ENCODE measurements at regions of chr14 and their contacts with region 1.

Region 1: GRCh38 chr14:29380826-29381225 is 546.8 kb downstream of the PRKD1 start:
- DNase-seq: no peak
- H3K4me3 ChIP-seq: no peak overlapping the region
- H3K27ac ChIP-seq: no peak overlapping the region
- H3K4me1 ChIP-seq: no peaks in the 10 kb centered on the region
- H3K27me3 ChIP-seq: no peaks in the 10 kb centered on the region
- CTCF ChIP-seq: no peak
- EP300 ChIP-seq: no peak
- POLR2A ChIP-seq: no peak

Region 2: DNA sequence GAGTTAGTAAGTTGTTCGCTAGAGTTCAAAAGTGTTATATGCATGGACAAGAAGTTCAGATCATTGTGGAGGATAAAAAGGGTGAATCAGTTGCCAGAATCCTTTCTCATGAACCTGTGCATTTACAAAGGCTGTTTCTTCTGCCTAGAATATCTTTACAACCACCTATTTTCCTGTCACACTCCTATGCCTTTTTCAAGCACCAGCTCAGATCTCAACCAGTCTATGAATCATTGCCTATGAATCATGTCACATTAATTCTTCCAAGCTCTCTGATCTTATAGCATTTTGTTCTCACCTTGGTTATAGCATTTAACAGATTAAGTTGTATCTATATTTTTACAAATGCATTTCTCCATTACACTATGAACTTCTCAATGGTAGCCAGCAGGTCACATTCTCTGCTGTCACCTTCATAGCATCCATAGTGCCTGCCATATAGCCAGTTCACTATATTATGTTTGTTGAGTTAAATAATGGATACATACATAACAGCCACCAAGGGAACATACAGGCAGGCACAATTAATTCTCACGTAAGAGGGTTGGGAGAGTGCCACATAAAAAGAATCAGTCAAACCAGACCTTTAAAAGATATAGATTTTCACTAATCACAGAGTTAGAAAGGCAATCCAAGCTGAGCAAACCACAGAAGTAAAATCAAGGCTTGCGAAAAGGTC is 41.2 kb before region 1 on chr14:
- in situ Hi-C with region 1: no loop called
- intact Hi-C with region 1: no loop called
- DNase-seq: no peak
- H3K4me3 ChIP-seq: no peak overlapping the region
- H3K27ac ChIP-seq: no peak overlapping the region
- H3K4me1 ChIP-seq: no peaks in the 10 kb centered on the region
- H3K27me3 ChIP-seq: no peaks in the 10 kb centered on the region
- CTCF ChIP-seq: no peak
- EP300 ChIP-seq: no peak
- POLR2A ChIP-seq: no peak

Region 3: DNA sequence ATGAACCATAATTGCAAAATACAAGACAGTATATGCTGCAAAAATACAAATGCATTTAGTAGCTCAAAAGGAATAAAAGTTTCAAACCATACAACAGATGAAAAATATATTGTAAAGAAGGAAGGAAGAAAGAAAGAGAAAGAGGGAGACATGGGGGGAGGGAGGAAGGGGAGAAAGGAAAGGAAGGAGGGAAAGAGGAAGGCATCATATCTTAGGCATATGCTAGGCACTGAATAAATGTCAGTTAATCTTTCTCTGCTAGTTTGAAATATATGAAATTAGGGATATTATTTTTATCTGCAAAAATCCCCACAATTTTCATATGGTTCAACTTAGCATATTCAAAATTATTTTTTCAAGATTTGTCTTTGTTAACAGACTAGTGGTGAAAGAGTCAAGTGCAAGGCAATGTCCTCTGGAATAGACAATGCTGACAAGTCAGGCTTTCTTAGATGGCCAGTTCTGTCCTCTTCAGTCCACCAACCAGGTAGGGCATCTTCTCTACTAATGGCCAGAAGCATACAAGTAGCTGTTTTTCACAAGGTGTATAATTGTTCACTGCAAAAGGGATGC is 40.4 kb after region 1 on chr14:
- in situ Hi-C with region 1: no loop called
- intact Hi-C with region 1: loop called (anchors 1 kb)
- DNase-seq: no peak
- H3K4me3 ChIP-seq: no peak overlapping the region
- H3K27ac ChIP-seq: no peak overlapping the region
- H3K4me1 ChIP-seq: no peaks in the 10 kb centered on the region
- H3K27me3 ChIP-seq: no peaks in the 10 kb centered on the region
- CTCF ChIP-seq: no peak
- EP300 ChIP-seq: no peak
- POLR2A ChIP-seq: no peak